Activated CD8-positive, alpha-beta T cell treated with anti-CD3 and anti-CD28 coated beads for 36 hours (primary cell): ENCODE measurements at regions of chr20 and their contacts with region 1.

Region 1: GRCh38 chr20:2172305-2173175 is 70.9 kb downstream of the STK35 start:
- DNase-seq: peak; percentile 76
- ATAC-seq: peak; percentile 81
- H3K4me3 Mint-ChIP-seq: no peak overlapping the region
- H3K27ac Mint-ChIP-seq: no peak overlapping the region
- H3K4me1 Mint-ChIP-seq: peaks cover 2% of the 10 kb centered on the region
- H3K27me3 Mint-ChIP-seq: peaks cover 13% of the 10 kb centered on the region
- CTCF ChIP-seq: peak; percentile 90

Region 2: DNA sequence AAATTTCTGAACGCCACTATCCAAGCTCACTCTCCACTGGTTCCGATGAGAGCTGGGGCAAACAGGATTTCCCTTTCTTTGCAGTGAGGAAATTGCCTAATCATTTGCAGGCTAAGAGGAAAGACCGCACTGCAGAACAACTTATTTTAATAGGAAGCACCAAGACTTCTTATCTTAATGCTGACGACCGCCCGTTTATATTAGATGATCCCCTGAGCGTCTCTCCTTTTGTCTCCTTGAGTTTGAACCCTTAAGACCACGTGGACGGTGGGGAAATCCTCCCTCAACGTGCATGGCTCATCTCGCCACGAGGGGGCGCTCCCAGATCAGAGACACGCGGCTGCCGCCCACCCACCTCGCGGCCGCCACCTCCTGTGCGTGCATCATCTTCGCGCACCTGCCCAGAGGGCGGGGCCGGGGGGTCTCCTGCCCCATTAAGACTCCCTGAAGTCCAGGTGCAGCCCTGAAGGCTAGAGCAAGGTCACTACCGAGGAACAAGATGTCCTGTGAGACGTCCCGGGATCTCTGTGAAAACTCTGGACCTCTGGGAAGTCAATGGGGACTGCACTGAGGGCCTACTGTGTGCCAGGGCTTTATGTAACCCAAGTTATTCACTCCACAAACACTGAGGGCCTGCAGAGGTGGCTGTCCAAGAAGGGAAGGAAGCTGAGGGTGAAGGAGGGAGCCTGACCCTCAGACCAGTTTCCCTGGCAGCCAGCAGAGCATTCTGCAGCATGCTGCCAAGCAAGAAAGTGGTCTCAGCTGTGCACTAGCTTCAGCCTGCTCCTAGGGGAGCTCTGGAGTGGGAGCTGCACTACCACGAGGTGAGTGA is 206.8 kb before region 1 on chr20:
- CTCF ChIA-PET with region 1: interaction called, 68 read pairs
- POLR2A ChIA-PET with region 1: no interaction called
- intact Hi-C with region 1: loop called (anchors 1 kb)
- DNase-seq: peak; percentile 91
- ATAC-seq: peak; percentile 92
- H3K4me3 Mint-ChIP-seq: peak overlapping the region; percentile 40
- H3K27ac Mint-ChIP-seq: peak overlapping the region; percentile 35
- H3K4me1 Mint-ChIP-seq: peaks cover 17% of the 10 kb centered on the region
- H3K27me3 Mint-ChIP-seq: peaks cover 32% of the 10 kb centered on the region
- CTCF ChIP-seq: peak; percentile 95

Region 3: DNA sequence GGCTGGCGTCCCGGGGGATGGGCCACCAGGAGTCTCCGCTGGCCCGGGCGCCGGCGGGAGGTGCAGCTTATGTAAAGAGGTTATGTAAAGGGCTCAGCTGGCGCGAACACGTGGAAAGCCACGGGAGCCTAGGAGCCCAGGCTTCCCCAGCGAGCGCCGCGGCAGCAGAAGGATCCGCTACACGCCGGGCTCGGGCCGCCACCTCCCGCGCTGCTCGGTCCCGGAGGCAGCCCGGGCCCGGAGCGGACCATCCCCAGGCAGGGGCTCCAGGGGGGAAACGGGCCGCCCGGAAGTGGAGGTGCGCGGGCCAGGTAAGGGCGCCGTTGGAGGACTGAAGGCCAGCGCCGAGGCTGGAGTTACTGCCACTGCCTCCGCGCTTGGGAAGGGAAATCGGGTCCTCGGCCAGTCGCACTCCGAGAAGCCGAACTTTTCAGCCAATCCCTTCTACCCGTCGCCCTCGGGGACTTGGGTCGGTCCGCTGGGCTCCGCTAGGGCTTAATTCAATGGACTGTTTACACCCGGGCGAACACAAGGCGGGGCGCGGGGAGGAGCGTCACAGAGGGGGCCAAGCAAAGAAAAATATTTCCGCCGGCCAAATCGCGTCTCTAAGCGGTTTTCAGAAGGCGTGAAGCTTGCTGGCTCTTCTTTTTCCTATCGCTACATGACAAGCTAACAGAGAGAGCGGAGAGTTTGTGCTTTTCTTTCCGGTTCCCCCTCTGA is 70.5 kb before region 1 on chr20:
- CTCF ChIA-PET with region 1: interaction called, 6 read pairs
- POLR2A ChIA-PET with region 1: no interaction called
- intact Hi-C with region 1: loop called (anchors 5 kb)
- DNase-seq: peak; percentile 92
- ATAC-seq: peak; percentile 84
- H3K4me3 Mint-ChIP-seq: peak overlapping the region; percentile 94
- H3K27ac Mint-ChIP-seq: peak overlapping the region; percentile 100
- H3K4me1 Mint-ChIP-seq: peaks cover 40% of the 10 kb centered on the region
- H3K27me3 Mint-ChIP-seq: no peaks in the 10 kb centered on the region
- CTCF ChIP-seq: no peak

Region 4: GRCh38 chr20:2183381-2183780 is 10.8 kb after region 1 on chr20:
- CTCF ChIA-PET with region 1: interaction called, 38 read pairs
- POLR2A ChIA-PET with region 1: no interaction called
- intact Hi-C with region 1: no loop called
- DNase-seq: no peak
- ATAC-seq: no peak
- H3K4me3 Mint-ChIP-seq: no peak overlapping the region
- H3K27ac Mint-ChIP-seq: no peak overlapping the region
- H3K4me1 Mint-ChIP-seq: no peaks in the 10 kb centered on the region
- H3K27me3 Mint-ChIP-seq: peaks cover 4% of the 10 kb centered on the region
- CTCF ChIP-seq: no peak

Region 5: GRCh38 chr20:2349818-2350508 is 177.4 kb after region 1 on chr20:
- CTCF ChIA-PET with region 1: no interaction called
- POLR2A ChIA-PET with region 1: no interaction called
- intact Hi-C with region 1: no loop called
- DNase-seq: no peak
- ATAC-seq: no peak
- H3K4me3 Mint-ChIP-seq: no peak overlapping the region
- H3K27ac Mint-ChIP-seq: no peak overlapping the region
- H3K4me1 Mint-ChIP-seq: no peaks in the 10 kb centered on the region
- H3K27me3 Mint-ChIP-seq: peaks cover 16% of the 10 kb centered on the region
- CTCF ChIP-seq: no peak